ENCODE measurements at regions of chr15 and their contacts with region 1.

Region 1: DNA sequence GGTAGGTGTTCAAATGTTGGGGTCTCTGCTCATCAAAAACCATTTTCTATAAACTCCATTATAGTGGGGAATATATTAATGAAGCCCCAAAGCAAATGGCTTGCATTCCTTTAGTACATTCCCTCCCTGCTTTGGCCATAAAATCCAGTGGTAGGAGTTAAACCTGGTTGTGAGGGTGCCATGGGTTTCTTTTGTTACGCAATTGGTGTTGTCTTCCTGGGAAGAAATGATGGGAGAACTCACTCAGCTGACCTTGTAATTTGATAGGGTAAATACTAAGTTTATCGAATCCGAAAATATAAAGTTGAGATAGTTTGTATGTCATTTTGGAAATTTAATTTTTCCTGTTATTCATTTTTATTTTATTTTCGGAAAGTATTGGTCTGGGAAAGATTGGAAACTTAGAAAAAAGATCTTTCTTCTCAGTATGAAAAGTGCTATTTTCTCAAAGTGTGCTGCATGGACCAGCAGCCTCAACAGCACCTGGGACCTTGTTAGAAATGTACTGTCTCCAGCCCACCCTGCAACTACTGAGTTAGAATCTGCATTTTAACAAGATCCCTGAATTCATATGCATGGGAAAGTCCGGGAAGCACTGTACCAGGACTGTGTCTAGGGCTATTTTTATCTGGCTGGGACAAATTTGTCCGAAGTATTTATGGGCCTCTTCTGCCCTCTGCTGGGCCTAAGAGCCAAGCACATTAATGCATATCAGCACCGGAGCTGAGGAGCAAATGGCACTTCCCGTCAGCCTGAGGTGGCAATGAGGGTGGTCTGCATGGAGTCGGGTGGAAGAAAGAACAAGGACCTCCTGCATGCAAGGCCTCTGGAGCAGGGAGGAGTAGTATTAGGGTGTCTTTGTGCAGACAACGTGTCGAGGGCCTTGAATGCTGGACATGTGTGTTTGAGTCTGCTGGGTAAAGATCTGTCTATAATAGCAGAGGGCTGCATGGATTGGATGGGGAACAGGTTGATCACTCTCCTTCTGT is 54.7 kb downstream of the FAM81A start:
- DNase-seq: no peak
- H3K4me3 ChIP-seq: no peak overlapping the region
- H3K27ac ChIP-seq: no peak overlapping the region
- H3K4me1 ChIP-seq: peaks cover 0 to 7% (median 6%) of the 10 kb centered on the region in 3 donors
- H3K27me3 ChIP-seq: no peaks in the 10 kb centered on the region
- CTCF ChIP-seq: peak; percentile 78 to 90 (median 86)
- POLR2A ChIP-seq: no peak

Region 2: GRCh38 chr15:58957101-58957973 is 535.3 kb before region 1 on chr15:
- intact Hi-C with region 1: loop called (anchors 10 kb)
- DNase-seq: no peak
- H3K4me3 ChIP-seq: no peak overlapping the region
- H3K27ac ChIP-seq: no peak overlapping the region
- H3K4me1 ChIP-seq: peaks cover 0 to 22% (median 4%) of the 10 kb centered on the region in 3 donors
- H3K27me3 ChIP-seq: no peaks in the 10 kb centered on the region
- CTCF ChIP-seq: peak; percentile 53 to 72 (median 69)
- POLR2A ChIP-seq: no peak

Region 3: GRCh38 chr15:59174835-59175831 is 317.6 kb before region 1 on chr15:
- intact Hi-C with region 1: loop called (anchors 10 kb)
- DNase-seq: no peak
- H3K4me3 ChIP-seq: no peak overlapping the region
- H3K27ac ChIP-seq: peak overlapping the region; percentile 43 to 78 (median 60)
- H3K4me1 ChIP-seq: peaks cover 11 to 36% (median 16%) of the 10 kb centered on the region in 3 donors
- H3K27me3 ChIP-seq: no peaks in the 10 kb centered on the region
- CTCF ChIP-seq: peak in 5 of 6 experiments; percentile 49 to 78 (median 62)
- POLR2A ChIP-seq: no peak

Region 4: DNA sequence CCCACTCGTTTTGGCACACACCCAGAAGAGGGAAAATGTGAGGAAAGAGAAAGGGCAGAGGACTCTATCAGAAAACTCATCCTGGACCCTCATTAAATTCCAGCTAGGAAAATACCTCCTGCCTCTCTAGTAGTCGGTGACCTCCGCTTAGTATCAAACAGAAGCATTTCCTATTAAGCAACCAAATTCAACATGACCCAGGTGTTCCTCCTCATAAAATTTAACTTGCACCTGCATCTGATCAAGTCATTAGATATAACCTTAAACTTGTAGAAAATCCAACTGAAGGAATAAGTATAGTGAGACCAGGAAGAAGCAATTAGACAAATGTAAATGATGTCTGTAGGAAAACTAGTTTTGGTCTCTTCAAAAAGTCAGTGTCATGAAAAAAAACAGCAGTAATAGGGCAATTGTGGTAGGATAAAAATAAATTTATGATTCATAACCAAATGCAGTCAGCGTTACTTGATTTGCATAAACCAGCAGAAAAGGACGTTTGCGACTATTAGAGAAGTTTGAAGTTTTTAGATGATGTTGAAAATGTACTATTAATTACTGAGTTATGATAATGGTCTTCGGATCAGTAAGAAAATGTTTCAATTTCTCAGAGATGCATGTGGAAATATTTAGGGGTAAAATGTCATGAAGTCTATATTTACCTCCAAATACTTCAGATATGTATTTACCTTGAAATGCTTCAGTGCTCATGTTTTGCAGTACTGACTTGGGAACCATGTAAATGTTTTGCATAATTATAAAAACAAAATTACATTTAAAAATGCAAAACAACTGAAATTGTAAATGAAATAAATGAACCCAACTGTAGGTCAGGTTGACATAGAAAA is 241.5 kb before region 1 on chr15:
- intact Hi-C with region 1: loop called (anchors 10 kb)
- DNase-seq: no peak
- H3K4me3 ChIP-seq: no peak overlapping the region
- H3K27ac ChIP-seq: peak overlapping the region in 2 of 4 donors; percentile 45 to 49
- H3K4me1 ChIP-seq: peaks cover 0 to 28% (median 4%) of the 10 kb centered on the region in 3 donors
- H3K27me3 ChIP-seq: no peaks in the 10 kb centered on the region
- CTCF ChIP-seq: no peak
- POLR2A ChIP-seq: no peak